ENCODE measurements at regions of chr6 and their contacts with region 1.

Region 1: DNA sequence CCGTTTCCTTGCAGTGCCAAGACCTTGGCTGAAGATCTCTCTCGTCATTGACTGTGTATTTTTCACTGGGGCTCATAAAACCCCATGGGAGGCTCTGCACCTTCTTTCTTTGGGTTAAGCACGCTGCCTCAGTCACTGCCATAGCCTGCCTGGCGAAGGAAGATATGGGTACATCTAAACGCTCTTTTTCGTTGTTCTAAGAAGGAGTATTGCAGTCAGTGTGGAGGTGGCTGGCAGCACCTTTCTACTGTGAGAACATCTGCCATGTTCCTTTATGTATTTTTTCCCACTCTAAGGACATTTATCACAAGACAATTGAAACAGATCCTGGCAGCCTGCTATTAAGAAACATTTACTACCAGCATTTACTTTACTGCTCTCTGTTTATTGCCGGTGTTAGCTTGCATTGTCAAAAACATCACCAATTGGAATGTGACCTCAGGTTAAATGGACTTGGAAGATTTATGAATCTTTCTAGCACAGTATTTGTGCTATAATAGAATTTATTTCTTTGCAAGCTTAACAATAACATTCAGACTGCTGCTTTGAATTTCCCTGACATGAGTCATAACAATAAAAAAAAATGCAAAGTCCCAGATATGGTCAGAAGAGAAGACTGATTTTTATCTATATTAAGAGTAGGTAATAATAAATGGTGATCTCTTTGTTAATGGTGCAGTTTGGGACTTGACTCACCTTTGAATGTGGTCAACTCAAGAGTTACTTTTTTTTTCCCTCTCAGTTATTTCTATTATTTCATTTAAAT is 62.2 kb upstream of the CLDN20 start:
- DNase-seq: peak; percentile 88
- ATAC-seq: peak; percentile 87
- H3K4me3 ChIP-seq: peak overlapping the region; percentile 16; the same call in 1 of the 2 replicates
- H3K27ac ChIP-seq: peak overlapping the region; percentile 93
- H3K4me1 ChIP-seq: peaks cover 14% of the 10 kb centered on the region
- H3K27me3 ChIP-seq: no peaks in the 10 kb centered on the region
- CTCF ChIP-seq: no peak

Region 2: DNA sequence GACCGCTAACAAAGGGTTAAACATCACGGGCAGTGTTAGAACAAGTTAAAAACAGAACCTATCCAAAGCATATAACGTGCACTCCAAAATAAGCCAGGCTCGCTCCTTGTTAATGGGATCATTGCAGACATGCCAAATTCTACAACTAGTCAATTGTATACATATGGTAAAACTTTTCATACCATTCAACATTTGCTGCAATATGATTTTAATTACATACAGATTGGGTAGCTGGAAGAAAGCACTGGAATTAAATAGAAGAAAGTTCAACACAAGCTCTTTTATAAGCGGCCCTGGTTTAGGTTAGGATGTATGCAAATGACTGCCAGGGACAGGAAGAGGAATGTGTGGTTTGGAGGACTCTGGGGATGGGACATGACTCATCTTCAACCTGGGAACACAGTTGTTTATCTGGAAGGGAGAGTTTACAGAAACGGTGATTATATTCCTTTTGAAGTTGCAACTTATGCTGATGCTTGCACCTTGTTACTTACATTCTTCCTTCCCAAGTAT is 269.1 kb before region 1 on chr6:
- CTCF ChIA-PET with region 1: no interaction called
- POLR2A ChIA-PET with region 1: no interaction called
- intact Hi-C with region 1: no loop called
- DNase-seq: peak; percentile 82
- ATAC-seq: peak; percentile 98
- H3K4me3 ChIP-seq: no peak overlapping the region
- H3K27ac ChIP-seq: peak overlapping the region; percentile 31
- H3K4me1 ChIP-seq: peaks cover 20% of the 10 kb centered on the region
- H3K27me3 ChIP-seq: no peaks in the 10 kb centered on the region
- CTCF ChIP-seq: no peak

Region 3: DNA sequence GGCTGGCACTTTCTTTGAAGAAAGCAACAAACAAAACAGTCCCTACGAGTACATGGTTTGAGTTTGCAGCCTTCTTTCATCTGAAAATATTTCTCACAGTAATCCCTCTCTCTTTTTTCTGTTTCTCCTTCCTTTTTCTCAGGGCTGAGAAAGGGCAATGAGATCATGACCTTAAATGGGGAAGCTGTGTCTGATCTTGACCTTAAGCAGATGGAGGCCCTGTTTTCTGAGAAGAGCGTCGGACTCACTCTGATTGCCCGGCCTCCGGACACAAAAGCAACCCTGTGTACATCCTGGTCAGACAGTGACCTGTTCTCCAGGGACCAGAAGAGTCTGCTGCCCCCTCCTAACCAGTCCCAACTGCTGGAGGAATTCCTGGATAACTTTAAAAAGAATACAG is 18.5 kb before region 1 on chr6:
- CTCF ChIA-PET with region 1: no interaction called
- POLR2A ChIA-PET with region 1: no interaction called
- intact Hi-C with region 1: no loop called
- DNase-seq: no peak
- ATAC-seq: no peak
- H3K4me3 ChIP-seq: no peak overlapping the region
- H3K27ac ChIP-seq: no peak overlapping the region
- H3K4me1 ChIP-seq: peaks cover 24% of the 10 kb centered on the region
- H3K27me3 ChIP-seq: no peaks in the 10 kb centered on the region
- CTCF ChIP-seq: no peak

Region 4: GRCh38 chr6:155223646-155224451 is 22.2 kb after region 1 on chr6:
- CTCF ChIA-PET with region 1: no interaction called
- POLR2A ChIA-PET with region 1: no interaction called
- intact Hi-C with region 1: loop called (anchors 1 kb)
- DNase-seq: peak; percentile 93
- ATAC-seq: peak; percentile 98
- H3K4me3 ChIP-seq: no peak overlapping the region
- H3K27ac ChIP-seq: peak overlapping the region; percentile 90
- H3K4me1 ChIP-seq: peaks cover 15% of the 10 kb centered on the region
- H3K27me3 ChIP-seq: no peaks in the 10 kb centered on the region
- CTCF ChIP-seq: no peak

Region 5: DNA sequence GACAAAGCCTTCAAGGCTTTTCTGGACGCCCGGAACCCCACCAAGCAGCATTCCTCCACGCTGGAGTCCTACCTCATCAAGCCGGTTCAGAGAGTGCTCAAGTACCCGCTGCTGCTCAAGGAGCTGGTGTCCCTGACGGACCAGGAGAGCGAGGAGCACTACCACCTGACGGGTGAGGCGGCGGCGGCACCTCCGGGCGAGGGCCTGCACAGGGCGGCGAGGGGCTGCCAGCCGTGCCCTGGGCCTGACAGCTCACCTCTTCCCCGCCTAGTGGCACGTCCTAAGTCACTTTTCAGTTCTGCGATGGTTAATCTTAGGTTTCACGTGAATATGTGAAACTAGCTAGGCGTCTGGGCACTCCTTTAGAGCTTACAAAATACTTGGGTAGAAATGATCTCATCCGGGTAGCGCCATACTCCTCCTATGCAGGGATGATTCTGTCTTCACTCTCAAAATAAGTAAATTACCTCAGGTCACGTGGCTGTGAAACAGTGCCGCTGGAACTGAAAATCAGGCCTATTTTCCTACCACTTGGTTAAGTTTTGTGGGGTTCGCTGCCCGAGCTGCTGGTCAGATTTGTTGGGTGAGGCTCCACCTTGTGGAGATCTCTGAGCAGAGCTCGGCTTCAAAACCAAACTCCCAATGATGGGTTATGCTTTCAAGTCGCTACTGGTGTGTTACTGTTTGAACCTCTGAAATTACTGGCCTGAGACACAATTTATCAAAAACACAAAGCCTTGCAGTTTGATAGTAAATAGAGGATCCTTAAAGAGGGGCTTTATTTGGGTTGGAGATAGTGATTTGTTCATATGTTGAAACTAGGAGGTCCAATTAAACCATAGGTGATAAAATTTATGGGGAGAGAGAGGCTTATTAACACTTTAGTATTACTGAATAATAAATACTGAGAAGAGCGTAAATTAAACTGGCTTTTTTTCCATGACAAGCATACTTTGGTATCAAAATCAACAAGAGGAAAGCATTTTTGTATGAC is 46.7 kb after region 1 on chr6:
- CTCF ChIA-PET with region 1: no interaction called
- POLR2A ChIA-PET with region 1: no interaction called
- intact Hi-C with region 1: no loop called
- DNase-seq: peak; percentile 32
- ATAC-seq: peak; percentile 35; the same call in 1 of the 2 replicates
- H3K4me3 ChIP-seq: no peak overlapping the region
- H3K27ac ChIP-seq: no peak overlapping the region
- H3K4me1 ChIP-seq: peaks cover 1% of the 10 kb centered on the region
- H3K27me3 ChIP-seq: no peaks in the 10 kb centered on the region
- CTCF ChIP-seq: peak; percentile 75